WTC11 (cell line): ENCODE measurements at regions of chr12 and their contacts with region 1.

Region 1: GRCh38 chr12:6470375-6471163 is at the start of gene VAMP1:
- DNase-seq: peak; percentile 99
- ATAC-seq: peak; percentile 96
- H3K4me3 Mint-ChIP-seq: peak within 1 kb of the TSS; percentile 68
- H3K27ac Mint-ChIP-seq: peak within 1 kb of the TSS; percentile 93
- H3K4me1 Mint-ChIP-seq: peaks cover 20% of the 10 kb centered on the region
- H3K27me3 Mint-ChIP-seq: peaks cover 18% of the 10 kb centered on the region
- CTCF ChIP-seq: no peak
- total RNA-seq, gene VAMP1: 12.8 to 14.3 TPM (median 13.8 TPM) in 3 replicates

Region 2: DNA sequence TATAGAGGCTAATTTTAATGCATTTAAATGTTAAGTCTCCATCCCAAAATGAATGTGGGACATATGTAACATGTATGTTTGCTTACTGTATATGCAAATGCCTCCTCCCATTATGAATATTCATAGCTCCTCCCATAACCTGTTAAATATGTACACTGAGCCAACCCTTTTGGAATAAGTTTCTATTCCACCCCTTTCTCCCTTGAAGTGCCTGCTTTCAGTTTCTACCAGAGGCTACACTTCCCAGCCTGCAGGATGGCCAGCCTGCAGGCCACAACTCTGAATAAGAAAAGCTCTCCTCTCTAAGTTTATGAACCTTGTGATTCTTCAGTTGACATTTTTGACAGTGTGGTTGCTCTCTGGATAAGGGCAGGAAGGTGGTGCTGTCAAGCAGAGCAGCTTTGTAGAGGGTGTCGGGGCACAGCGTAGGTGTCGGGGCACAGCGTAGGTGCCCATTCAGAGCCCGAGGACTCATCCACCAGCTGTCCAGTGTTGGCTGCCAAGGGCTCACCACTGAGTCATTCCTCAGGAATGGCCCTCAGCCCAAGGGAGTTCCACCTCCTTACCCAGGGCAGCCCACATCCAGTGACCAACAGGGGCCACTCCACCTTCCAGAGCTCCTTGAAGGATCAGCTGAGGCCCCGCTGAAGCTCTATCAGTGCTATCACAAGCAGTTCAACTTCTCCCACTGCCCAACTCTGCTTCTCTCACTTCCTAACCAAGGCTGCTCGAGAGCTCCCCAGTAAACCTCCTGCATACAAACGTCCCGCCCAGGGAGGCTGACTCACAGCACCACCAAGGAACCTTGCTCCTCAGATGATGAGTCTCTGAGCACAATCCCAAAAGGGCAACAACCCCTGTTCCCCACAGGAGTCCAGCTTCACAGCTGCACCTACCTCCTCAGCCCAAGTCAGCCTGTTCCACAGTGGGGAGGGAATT is 377.5 kb before region 1 on chr12:
- CTCF ChIA-PET with region 1: no interaction called
- POLR2A ChIA-PET with region 1: no interaction called
- DNase-seq: no peak
- ATAC-seq: no peak; the same call in 1 of the 2 replicates
- H3K4me3 Mint-ChIP-seq: no peak overlapping the region
- H3K27ac Mint-ChIP-seq: no peak overlapping the region
- H3K4me1 Mint-ChIP-seq: peaks cover 21% of the 10 kb centered on the region
- H3K27me3 Mint-ChIP-seq: peaks cover 21% of the 10 kb centered on the region
- CTCF ChIP-seq: no peak

Region 3: GRCh38 chr12:6335451-6336078 is 135.0 kb before region 1 on chr12:
- CTCF ChIA-PET with region 1: interaction called, 20 read pairs
- POLR2A ChIA-PET with region 1: interaction called, 18 read pairs
- DNase-seq: peak; percentile 51
- ATAC-seq: peak; percentile 10
- H3K4me3 Mint-ChIP-seq: no peak overlapping the region; the same call in none of the 2 replicates
- H3K27ac Mint-ChIP-seq: no peak overlapping the region
- H3K4me1 Mint-ChIP-seq: peaks cover 18% of the 10 kb centered on the region
- H3K27me3 Mint-ChIP-seq: no peaks in the 10 kb centered on the region
- CTCF ChIP-seq: no peak

Region 4: DNA sequence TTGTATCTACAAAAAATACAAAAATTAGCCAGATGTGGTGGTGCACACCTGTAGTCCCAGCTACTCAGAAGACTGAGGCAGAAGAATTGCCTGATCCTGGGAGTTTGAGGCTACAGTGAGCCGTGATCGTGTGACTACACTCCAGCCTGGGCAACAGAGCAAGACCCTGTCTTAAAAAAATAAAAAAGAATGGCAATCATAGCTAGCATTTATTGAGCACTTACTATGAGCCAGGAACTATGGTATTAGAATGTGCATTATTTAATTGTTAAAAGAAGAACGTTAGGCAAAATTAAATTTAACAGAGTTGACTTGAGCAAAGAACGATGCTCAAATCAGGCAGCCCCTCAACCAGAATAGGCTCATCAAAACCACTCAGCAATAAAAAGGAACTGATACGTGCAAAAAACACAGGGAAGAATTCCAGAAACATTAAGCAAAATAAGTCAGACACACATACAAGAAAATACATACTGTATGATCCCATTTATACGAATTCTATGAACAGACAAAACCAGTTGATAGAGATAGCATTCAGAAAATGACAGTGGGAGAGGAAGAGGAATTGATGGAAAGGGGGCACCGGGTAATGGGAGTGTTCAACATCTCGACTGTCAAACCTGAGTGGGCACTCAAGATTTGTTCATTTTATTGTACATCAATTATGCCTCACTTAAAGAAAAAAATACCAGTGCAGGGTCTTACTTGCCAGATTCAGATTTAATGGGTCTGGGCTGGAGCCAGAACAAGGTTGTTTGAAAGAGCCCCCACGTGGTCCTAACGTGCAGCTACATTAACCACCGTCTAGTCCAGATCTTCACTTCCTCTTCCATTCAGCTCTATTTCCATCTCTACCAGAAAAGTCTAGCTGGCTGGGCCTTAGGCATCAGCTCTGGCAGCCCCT is 103.3 kb before region 1 on chr12:
- CTCF ChIA-PET with region 1: interaction called, 11 read pairs
- POLR2A ChIA-PET with region 1: interaction called, 3 read pairs
- DNase-seq: no peak
- ATAC-seq: no peak
- H3K4me3 Mint-ChIP-seq: no peak overlapping the region
- H3K27ac Mint-ChIP-seq: peak overlapping the region; percentile 33; the same call in 1 of the 2 replicates
- H3K4me1 Mint-ChIP-seq: peaks cover 58% of the 10 kb centered on the region
- H3K27me3 Mint-ChIP-seq: no peaks in the 10 kb centered on the region
- CTCF ChIP-seq: no peak

Region 5: DNA sequence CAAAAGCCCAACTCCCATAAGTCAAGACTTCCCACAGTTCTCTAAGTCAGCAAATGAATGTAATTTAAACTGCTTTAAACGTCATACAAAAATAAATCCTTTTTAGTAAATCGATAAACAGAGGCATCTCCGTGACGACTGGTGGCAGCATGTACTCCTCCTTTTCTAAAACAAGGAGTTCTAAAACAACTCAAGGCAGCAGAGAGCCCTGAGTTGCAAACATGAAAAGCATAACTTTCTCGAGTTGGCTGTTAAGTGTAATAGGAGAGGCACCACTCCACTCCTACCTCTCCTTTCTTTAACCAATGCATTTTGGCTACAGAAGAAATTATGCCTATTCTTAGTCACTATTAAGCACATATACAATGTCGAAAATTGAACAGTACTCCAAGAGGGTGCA is 64.6 kb before region 1 on chr12:
- CTCF ChIA-PET with region 1: no interaction called
- POLR2A ChIA-PET with region 1: no interaction called
- DNase-seq: no peak
- ATAC-seq: no peak
- H3K4me3 Mint-ChIP-seq: no peak overlapping the region
- H3K27ac Mint-ChIP-seq: no peak overlapping the region
- H3K4me1 Mint-ChIP-seq: no peaks in the 10 kb centered on the region
- H3K27me3 Mint-ChIP-seq: no peaks in the 10 kb centered on the region
- CTCF ChIP-seq: no peak

Region 6: DNA sequence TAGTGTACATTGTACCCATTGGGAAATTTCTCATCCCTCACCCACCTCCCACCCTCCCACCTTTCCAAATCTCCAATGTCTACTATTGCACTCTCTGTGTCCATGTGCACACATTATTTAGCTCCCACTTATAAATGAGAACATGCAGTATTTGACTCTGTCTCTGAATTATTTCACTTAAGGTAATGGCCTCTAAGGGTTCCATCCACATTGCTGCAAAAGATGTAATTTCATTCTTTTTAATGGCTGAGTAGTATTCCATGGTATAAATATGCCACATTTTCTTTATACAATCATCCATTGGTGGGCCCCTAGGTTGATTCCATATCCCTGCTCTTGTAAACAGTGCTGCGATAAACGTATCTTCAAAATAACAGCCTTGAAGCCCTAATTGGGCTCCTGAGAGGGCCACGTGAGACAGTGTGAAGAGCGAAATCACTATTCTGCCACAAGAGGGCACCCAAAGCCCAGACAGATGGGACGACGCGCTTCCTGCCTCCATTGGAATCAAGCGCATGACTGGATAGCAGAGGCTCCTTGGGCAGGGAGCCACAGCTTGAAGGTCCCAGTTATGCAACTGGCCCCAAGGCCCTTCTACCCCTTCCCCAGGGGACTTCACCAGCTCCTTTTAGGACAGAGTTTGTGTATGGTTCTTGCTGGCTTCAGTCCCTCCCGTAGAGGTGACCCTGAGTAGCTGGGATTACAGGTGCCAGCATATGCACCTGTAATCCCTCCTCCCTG is 47.1 kb before region 1 on chr12:
- CTCF ChIA-PET with region 1: interaction called, 77 read pairs
- POLR2A ChIA-PET with region 1: interaction called, 3 read pairs
- DNase-seq: peak; percentile 77
- ATAC-seq: peak; percentile 96
- H3K4me3 Mint-ChIP-seq: no peak overlapping the region
- H3K27ac Mint-ChIP-seq: no peak overlapping the region
- H3K4me1 Mint-ChIP-seq: peaks cover 8% of the 10 kb centered on the region
- H3K27me3 Mint-ChIP-seq: no peaks in the 10 kb centered on the region; the same call in none of the 2 replicates
- CTCF ChIP-seq: peak; percentile 83; the same call in 1 of the 2 replicates

Region 7: DNA sequence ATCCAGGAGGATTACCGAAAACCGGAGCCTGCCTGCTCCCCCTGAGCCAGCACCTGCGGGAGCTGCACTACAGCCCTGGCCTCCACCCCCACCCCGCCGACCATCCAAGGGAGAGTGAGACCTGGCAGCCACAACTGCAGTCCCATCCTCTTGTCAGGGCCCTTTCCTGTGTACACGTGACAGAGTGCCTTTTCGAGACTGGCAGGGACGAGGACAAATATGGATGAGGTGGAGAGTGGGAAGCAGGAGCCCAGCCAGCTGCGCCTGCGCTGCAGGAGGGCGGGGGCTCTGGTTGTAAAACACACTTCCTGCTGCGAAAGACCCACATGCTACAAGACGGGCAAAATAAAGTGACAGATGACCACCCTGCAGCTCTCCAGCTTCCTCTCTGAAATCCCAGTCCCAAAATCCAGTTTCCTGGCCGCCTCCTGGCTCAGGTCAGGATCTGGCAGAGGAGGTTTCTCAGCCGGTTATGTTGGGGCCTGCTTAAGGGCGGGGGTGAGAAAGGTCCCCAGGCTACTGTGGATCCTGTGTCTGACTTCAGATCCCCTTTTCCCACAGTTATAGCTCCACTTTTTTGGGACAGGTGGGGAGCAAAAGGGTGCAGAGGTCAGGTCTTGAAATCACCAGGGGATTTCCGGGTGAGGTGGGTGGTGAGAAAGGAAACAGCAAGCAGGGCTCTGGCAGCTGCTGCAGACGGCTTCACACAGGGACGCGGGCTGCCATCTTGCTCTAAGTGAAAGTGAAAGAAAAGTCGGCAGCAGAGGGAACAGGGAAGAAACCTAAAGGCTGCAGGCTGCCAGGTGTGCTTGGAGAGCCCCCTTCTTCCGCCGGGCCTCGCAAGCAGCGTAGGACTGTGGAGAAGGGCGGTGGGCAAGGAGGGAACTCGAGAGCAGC is 19.0 kb before region 1 on chr12 and contains the start of gene TAPBPL:
- CTCF ChIA-PET with region 1: interaction called, 39 read pairs
- POLR2A ChIA-PET with region 1: interaction called, 16 read pairs
- DNase-seq: peak; percentile 54
- ATAC-seq: peak; percentile 50
- H3K4me3 Mint-ChIP-seq: peak within 1 kb of the TSS; percentile 51
- H3K27ac Mint-ChIP-seq: peak within 1 kb of the TSS; percentile 92
- H3K4me1 Mint-ChIP-seq: peaks cover 39% of the 10 kb centered on the region
- H3K27me3 Mint-ChIP-seq: no peaks in the 10 kb centered on the region
- CTCF ChIP-seq: no peak
- total RNA-seq, gene TAPBPL: 0.98 to 1.3 TPM (median 1.1 TPM) in 3 replicates

Region 8: DNA sequence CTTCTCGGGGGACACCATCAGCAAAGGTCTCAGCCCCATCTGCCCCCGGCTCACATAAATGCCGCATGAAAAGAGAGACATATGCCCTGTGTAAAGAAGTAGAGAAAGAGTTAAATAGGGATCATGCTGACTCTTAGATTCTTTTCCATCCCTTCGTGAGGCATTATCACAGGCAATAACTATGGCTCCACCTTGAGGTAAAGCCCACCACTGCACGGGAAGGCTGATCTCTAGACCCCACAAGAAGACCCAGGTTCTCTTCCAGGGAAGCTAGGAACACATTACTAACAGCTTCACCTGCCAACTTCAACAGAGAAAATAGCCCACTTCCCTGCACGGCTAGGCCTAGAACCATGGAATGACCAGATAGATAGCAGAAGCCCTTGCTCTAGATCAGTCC is 111.6 kb after region 1 on chr12:
- CTCF ChIA-PET with region 1: no interaction called
- POLR2A ChIA-PET with region 1: no interaction called
- DNase-seq: peak; percentile 29
- ATAC-seq: peak; percentile 72
- H3K4me3 Mint-ChIP-seq: no peak overlapping the region
- H3K27ac Mint-ChIP-seq: no peak overlapping the region; the same call in 1 of the 2 replicates
- H3K4me1 Mint-ChIP-seq: no peaks in the 10 kb centered on the region
- H3K27me3 Mint-ChIP-seq: no peaks in the 10 kb centered on the region
- CTCF ChIP-seq: no peak